RWPE1 (cell line): ENCODE measurements at regions of chr15 and their contacts with region 1.

Region 1: DNA sequence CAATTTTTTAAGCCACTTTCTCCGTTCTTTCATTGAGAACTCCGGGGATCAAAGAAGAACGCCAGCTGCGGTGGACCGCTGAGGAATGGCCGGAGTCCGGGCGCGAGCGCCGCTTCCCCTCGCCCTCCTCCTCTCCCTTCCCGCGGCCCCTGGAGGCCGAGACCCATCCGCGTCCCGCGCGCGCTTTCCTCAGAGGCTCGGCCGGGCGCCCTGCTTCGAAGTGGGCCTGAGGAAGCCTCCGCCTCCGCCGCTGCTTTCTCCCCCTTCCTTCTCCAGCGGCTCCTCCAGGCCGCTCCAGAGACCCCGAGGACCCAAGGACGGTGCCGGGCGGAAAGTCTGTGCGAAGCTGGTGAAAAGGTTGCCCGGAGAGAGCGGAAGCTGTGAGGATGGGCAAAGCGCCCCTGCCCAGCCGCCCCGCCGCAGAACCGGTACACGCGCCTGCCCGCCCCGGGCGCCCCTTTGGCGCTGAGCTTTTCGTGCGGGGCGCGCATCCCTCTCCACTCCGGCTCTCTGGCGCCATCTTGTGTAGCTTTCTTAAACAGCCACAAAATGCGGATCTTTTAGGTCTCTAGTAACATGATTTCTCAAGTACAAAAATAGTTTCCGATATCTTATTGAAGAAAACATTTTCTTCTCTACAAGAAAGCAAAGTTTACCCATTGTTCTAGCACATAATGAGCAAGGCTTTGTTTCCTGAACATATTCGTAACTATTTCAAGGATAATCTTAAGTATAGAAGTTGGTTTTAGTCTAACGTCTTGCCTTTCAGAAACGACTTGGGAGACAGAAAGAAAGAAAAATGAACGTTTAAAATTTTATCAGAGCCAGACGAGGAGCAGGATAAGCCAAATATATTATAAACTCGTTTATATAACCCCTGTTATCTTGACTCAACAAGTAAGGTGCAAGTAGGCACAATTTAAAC is 59.2 kb upstream of the FAM174B start:
- DNase-seq: peak; percentile 64
- H3K27ac ChIP-seq: no peak overlapping the region
- CTCF ChIP-seq: peak; percentile 98

Region 2: GRCh38 chr15:92097474-92098178 is 617.1 kb before region 1 on chr15:
- CTCF ChIA-PET with region 1: interaction called, 12 read pairs
- POLR2A ChIA-PET with region 1: no interaction called
- DNase-seq: peak; percentile 65
- H3K27ac ChIP-seq: no peak overlapping the region
- CTCF ChIP-seq: peak; percentile 83

Region 3: GRCh38 chr15:92277776-92278175 is 437.0 kb before region 1 on chr15:
- CTCF ChIA-PET with region 1: interaction called, 12 read pairs
- POLR2A ChIA-PET with region 1: no interaction called
- DNase-seq: peak; percentile 33
- H3K27ac ChIP-seq: no peak overlapping the region
- CTCF ChIP-seq: peak; percentile 20; the same call in 1 of the 2 replicates

Region 4: GRCh38 chr15:92492551-92493115 is 222.1 kb before region 1 on chr15:
- CTCF ChIA-PET with region 1: no interaction called
- POLR2A ChIA-PET with region 1: no interaction called
- DNase-seq: no peak
- H3K27ac ChIP-seq: no peak overlapping the region
- CTCF ChIP-seq: no peak

Region 5: DNA sequence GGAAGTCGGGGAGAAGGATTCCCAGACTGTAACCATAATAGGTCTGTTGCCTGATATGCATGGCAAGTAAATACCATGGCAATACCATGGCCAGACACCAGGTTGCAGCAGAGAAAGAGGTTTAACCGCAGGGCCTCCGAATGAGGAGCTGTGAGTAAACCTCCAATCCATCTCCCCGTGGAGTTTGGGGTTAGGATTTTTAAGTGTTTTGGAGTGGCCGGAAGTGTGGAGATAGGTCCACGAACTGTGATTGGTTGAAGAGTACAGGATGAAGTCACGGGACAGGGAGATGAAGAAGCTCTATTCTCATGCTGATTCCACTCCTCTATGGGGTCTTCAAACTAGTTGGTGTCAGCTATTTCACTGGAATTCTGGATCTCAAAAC is 193.1 kb before region 1 on chr15:
- CTCF ChIA-PET with region 1: interaction called, 29 read pairs
- POLR2A ChIA-PET with region 1: no interaction called
- DNase-seq: peak; percentile 58
- H3K27ac ChIP-seq: no peak overlapping the region
- CTCF ChIP-seq: peak; percentile 62

Region 6: DNA sequence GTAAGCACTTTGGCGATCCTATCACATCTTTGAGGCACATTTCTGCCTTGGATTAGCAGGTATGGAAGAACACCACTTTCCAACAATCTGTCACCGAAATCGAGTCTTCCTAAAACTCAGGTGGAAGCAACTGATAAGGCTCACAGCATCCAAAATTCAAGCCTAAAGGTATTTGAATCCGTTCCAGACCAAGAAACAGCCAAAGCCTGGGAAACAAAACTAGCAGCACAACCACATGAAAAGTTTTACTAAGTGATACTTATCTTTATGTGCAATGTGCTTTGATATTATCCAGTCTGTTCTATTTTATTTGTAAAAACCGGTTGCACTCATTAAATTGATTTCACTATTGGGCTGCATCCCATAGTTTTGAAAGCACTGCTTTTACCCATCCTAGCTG is 18.6 kb before region 1 on chr15:
- CTCF ChIA-PET with region 1: no interaction called
- POLR2A ChIA-PET with region 1: no interaction called
- DNase-seq: no peak
- H3K27ac ChIP-seq: no peak overlapping the region
- CTCF ChIP-seq: no peak

Region 7: DNA sequence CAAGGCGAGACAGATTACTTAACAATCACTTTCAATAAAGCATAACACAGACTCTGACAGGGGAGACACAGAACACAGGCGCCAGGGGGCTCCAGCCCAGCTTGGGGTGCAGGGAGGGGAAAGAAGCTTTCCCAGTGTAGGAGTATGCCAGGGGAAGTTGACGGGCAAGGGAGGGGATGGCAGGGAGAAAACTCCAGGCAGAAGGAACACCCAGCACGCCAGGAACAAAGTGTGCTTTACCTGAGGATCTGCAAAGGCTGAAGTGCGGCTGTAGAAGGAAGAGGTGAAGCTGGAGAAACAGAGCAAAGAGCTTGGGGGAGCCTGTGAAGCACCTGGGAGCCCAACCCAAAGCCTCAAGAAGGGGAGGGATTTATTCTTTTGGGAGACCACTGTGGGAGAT is 362.1 kb after region 1 on chr15:
- CTCF ChIA-PET with region 1: no interaction called
- POLR2A ChIA-PET with region 1: no interaction called
- DNase-seq: no peak
- H3K27ac ChIP-seq: no peak overlapping the region
- CTCF ChIP-seq: no peak